Mammary epithelial cell (primary cell): ENCODE measurements at regions of chr11 and their contacts with region 1.

Region 1: DNA sequence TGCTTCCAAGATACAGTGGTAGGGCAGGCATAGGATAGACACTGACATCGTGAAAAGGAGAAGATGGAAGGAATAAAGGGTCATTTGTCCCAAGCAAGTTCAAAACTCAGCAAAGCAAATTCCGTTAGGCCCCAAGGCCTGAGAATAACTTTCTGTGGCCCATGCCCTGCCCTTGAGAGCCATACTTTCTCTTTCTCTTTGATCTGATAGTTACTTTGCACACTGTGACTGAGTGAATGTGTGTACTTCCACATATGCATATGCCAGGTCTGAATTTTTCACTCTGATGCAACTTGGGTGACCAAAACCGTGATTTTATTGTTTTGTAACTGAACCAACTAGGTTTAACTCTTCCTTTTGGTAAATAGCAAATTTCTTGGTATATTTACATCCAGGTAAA is 371.5 kb downstream of the RAB38 start:
- DNase-seq: no peak
- H3K4me3 ChIP-seq: no peak overlapping the region
- H3K27ac ChIP-seq: no peak overlapping the region
- H3K4me1 ChIP-seq: no peaks in the 10 kb centered on the region
- H3K27me3 ChIP-seq: no peaks in the 10 kb centered on the region
- CTCF ChIP-seq: no peak

Region 2: DNA sequence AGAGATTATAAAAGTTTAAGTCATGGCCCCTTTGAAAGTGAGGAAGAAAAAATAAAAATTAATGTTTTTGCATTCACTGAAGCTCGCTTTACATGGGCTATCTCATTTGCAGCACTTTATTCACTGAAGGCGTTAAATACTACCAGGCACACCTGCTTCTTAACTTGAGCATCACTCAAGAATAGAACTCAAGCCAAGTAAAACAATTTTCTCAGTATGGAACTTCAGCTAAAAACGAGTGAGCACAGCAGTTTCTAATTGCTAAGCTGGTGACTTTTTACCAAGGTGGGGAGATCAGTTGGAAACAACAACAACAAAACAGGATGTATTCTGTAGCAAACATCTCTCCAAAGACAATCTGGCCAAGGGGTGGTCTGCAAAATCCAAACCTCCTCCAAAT is 34.1 kb before region 1 on chr11:
- CTCF ChIA-PET with region 1: no interaction called
- dilution Hi-C with region 1: loop called (anchors 5 kb)
- in situ Hi-C with region 1: no loop called
- intact Hi-C with region 1: no loop called
- DNase-seq: no peak
- H3K4me3 ChIP-seq: no peak overlapping the region
- H3K27ac ChIP-seq: no peak overlapping the region
- H3K4me1 ChIP-seq: no peaks in the 10 kb centered on the region
- H3K27me3 ChIP-seq: peaks cover 3% of the 10 kb centered on the region
- CTCF ChIP-seq: no peak